ENCODE measurements at regions of chr20 and their contacts with region 1.

Region 1: GRCh38 chr20:51966291-51966971 is 164.1 kb upstream of the SALL4 start:
- DNase-seq: no peak
- H3K4me3 ChIP-seq: no peak overlapping the region
- H3K4me3 Mint-ChIP-seq: no peak overlapping the region
- H3K27ac ChIP-seq: no peak overlapping the region
- H3K27ac Mint-ChIP-seq: peak overlapping the region in 1 of 8 donors; percentile 56
- H3K4me1 ChIP-seq: no peaks in the 10 kb centered on the region
- H3K4me1 Mint-ChIP-seq: peaks cover 0 to 2% (median 0%) of the 10 kb centered on the region in 3 donors
- H3K27me3 ChIP-seq: no peaks in the 10 kb centered on the region
- H3K27me3 Mint-ChIP-seq: peaks cover 1 to 24% of the 10 kb centered on the region in 2 donors

Region 2: DNA sequence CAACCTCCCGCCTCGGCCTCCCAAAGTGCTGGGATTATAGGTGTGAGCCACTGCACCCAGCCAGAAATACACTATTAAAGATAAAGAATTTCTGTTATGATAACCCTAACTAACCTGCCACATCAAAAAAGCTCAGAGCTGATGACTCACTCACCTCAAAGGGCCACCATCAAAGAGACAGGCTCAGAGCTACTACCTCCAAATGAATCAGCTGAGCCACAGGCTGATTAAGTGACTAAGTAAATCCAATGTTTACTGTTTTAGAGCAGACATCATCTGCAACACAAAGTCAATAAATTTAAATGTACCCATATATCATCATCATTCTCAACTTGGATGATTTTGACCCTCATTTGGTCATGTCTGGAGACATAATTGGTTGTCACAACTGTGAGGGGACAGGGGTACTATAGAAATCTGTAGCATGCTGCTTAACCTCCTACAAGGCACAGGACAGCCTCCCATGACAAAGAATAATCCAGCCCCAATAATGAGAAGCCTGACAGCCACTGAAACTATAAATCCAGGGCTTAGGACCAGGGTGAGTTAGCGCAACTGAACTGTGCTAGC is 304.7 kb before region 1 on chr20:
- CTCF ChIA-PET with region 1: no interaction called
- POLR2A ChIA-PET with region 1: interaction called, 12 read pairs
- DNase-seq: peak in 2 of 5 donors; percentile 51 to 75
- H3K4me3 ChIP-seq: no peak overlapping the region
- H3K4me3 Mint-ChIP-seq: peak overlapping the region in 3 of 7 donors; percentile 2 to 10 (median 4)
- H3K27ac ChIP-seq: no peak overlapping the region
- H3K27ac Mint-ChIP-seq: peak overlapping the region in 2 of 8 donors; percentile 35 to 63
- H3K4me1 ChIP-seq: peaks cover 18% of the 10 kb centered on the region
- H3K4me1 Mint-ChIP-seq: peaks cover 25 to 31% (median 29%) of the 10 kb centered on the region in 3 donors
- H3K27me3 ChIP-seq: no peaks in the 10 kb centered on the region
- H3K27me3 Mint-ChIP-seq: peaks cover 2 to 3% of the 10 kb centered on the region in 2 donors

Region 3: GRCh38 chr20:52104546-52105441 is 138.4 kb after region 1 on chr20:
- CTCF ChIA-PET with region 1: no interaction called
- POLR2A ChIA-PET with region 1: no interaction called
- DNase-seq: no peak
- H3K4me3 ChIP-seq: peak overlapping the region; percentile 37
- H3K4me3 Mint-ChIP-seq: peak overlapping the region; percentile 48 to 90 (median 80)
- H3K27ac ChIP-seq: no peak overlapping the region
- H3K27ac Mint-ChIP-seq: no peak overlapping the region
- H3K4me1 ChIP-seq: peaks cover 30% of the 10 kb centered on the region
- H3K4me1 Mint-ChIP-seq: peaks cover 19 to 34% (median 22%) of the 10 kb centered on the region in 3 donors
- H3K27me3 ChIP-seq: peaks cover 14% of the 10 kb centered on the region
- H3K27me3 Mint-ChIP-seq: peaks cover 33 to 44% of the 10 kb centered on the region in 2 donors